ENCODE measurements at regions of chr3 and their contacts with region 1.

Region 1: DNA sequence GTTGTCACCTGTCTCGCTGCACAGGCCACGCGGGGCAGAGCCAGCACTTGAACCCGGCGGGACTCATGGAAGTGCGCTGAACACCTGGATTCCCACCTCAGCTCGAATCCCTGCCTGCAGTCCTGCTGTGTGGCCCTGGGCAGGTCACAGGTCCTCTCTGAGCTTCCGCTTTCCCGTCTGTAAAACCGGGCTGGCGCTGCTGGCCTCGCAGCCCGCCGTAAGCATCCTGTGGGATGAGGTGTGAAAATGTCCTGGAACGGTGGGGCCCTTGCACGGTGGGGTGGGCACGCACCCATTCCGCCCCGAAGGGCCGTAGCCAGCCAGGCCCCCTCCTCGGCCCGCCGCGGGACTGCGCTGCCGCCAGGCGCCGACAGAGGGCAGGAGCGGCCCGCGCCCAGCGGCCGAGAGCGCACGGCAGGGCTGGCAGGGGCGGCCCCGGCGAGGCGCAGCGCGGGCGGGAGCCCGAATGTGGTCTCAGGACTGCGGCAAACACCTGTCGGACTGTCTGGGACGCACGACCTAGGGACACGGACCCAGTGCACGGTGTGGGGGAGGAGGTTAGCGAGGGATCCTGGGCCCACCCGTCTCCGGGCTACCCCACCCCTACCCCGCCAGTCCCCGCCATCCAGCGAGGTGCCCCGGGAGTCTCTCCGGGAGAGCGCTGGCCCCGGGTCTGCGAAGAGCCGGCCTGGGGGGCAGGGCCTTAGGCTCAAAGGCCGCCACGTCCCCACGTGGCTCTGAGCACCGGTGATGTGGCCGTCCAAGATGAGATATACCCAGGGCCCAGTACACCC is 40.4 kb downstream of the DNAJB8 start:
- DNase-seq: peak; percentile 23 to 81 (median 61)
- ATAC-seq: peak; percentile 93
- H3K4me3 ChIP-seq: no peak overlapping the region
- H3K4me3 Mint-ChIP-seq: peak overlapping the region in 1 of 10 donors; percentile 19
- H3K27ac ChIP-seq: no peak overlapping the region
- H3K27ac Mint-ChIP-seq: no peak overlapping the region
- H3K4me1 ChIP-seq: no peaks in the 10 kb centered on the region
- H3K4me1 Mint-ChIP-seq: peaks cover 0 to 4% (median 0%) of the 10 kb centered on the region in 7 donors
- H3K27me3 ChIP-seq: no peaks in the 10 kb centered on the region
- H3K27me3 Mint-ChIP-seq: peaks cover 9 to 35% (median 22%) of the 10 kb centered on the region in 5 donors

Region 2: DNA sequence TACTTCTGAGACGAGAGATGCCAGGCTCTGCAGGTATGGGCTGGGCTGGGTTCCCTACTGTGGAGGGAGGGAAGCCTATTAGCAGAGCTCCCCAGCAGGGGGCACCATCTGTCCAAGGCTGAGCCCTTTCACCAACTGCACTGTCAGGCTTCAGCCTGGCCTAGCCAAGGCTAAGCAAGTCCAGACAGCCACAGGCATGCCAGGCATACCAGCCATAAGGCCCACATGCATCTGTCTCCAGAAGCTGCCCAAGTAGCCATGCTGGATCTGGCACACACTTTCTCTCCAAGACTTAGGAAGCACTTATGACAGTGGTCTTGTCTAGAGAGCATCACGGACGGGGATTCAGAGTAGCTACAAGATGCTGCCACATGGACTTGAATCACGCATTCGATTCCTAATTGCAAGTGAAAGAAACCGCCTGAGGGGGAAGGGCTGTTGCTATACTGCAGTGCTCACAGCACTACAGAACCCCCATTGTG is 331.1 kb before region 1 on chr3:
- CTCF ChIA-PET with region 1: interaction called, 4 read pairs
- POLR2A ChIA-PET with region 1: no interaction called
- intact Hi-C with region 1: loop called (anchors 1 to 10 kb)
- DNase-seq: peak; percentile 51 to 79 (median 73)
- ATAC-seq: peak; percentile 99
- H3K4me3 ChIP-seq: no peak overlapping the region
- H3K4me3 Mint-ChIP-seq: no peak overlapping the region
- H3K27ac ChIP-seq: no peak overlapping the region
- H3K27ac Mint-ChIP-seq: peak overlapping the region in 4 of 9 donors; percentile 16 to 68 (median 36)
- H3K4me1 ChIP-seq: no peaks in the 10 kb centered on the region
- H3K4me1 Mint-ChIP-seq: peaks cover 1 to 18% (median 6%) of the 10 kb centered on the region in 7 donors
- H3K27me3 ChIP-seq: no peaks in the 10 kb centered on the region
- H3K27me3 Mint-ChIP-seq: no peaks in the 10 kb centered on the region

Region 3: GRCh38 chr3:128447561-128448013 is 21.3 kb after region 1 on chr3:
- CTCF ChIA-PET with region 1: no interaction called
- POLR2A ChIA-PET with region 1: no interaction called
- intact Hi-C with region 1: loop called in 1 of 2 experiments (anchors 1 kb)
- DNase-seq: peak in 5 of 9 donors; percentile 22 to 63 (median 27)
- ATAC-seq: peak; percentile 29
- H3K4me3 ChIP-seq: no peak overlapping the region
- H3K4me3 Mint-ChIP-seq: peak overlapping the region in 6 of 10 donors; percentile 4 to 82 (median 34)
- H3K27ac ChIP-seq: peak overlapping the region; percentile 4
- H3K27ac Mint-ChIP-seq: peak overlapping the region in 7 of 9 donors; percentile 39 to 94 (median 81)
- H3K4me1 ChIP-seq: peaks cover 0 to 17% of the 10 kb centered on the region in 2 donors
- H3K4me1 Mint-ChIP-seq: peaks cover 17 to 45% (median 36%) of the 10 kb centered on the region in 7 donors
- H3K27me3 ChIP-seq: no peaks in the 10 kb centered on the region
- H3K27me3 Mint-ChIP-seq: peaks cover 0 to 8% (median 3%) of the 10 kb centered on the region in 5 donors

Region 4: DNA sequence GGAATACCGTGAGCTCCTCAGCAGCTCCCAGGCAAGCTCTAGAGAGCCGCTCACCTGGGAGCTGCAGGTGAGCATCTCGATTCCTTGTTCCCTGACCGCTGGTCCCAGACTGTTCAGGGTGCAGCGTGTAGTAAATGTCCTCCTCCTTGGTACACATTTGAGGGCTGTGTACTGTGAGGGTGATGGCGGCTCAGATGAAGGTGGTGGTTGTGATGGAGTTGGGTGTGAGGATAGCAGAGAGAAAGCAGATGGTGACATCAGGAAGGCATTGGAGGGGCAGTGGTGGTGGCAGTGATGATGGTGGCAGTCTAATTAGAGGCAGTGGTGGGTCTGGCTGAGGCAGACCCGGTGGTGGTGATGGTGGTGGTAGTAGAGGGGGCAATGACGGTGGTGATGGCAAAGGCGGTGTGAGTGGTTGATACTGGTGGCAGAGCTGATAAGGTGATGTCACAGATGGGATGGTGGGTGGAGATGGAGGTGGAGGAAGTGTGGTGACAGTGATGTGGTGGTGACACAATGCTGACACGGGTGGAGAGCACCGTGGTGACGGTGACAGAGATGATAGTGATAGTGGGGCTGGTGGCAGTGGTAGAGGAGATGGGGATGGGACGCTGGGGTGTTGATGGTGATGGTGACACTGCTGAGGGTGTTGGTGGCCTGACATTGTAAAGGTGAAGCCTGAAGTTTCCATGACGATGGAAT is 40.7 kb after region 1 on chr3 and contains the start of gene DNAJB8:
- CTCF ChIA-PET with region 1: no interaction called
- POLR2A ChIA-PET with region 1: no interaction called
- intact Hi-C with region 1: loop called in 1 of 2 experiments (anchors 5 kb)
- DNase-seq: peak in 7 of 9 donors; percentile 15 to 55 (median 37)
- ATAC-seq: peak; percentile 84
- H3K4me3 ChIP-seq: no peak within 1 kb of the TSS
- H3K4me3 Mint-ChIP-seq: peak within 1 kb of the TSS in 1 of 10 donors; percentile 38
- H3K27ac ChIP-seq: no peak within 1 kb of the TSS
- H3K27ac Mint-ChIP-seq: peak within 1 kb of the TSS in 8 of 9 donors; percentile 0 to 69 (median 49)
- H3K4me1 ChIP-seq: no peaks in the 10 kb centered on the region
- H3K4me1 Mint-ChIP-seq: peaks cover 3 to 15% (median 9%) of the 10 kb centered on the region in 7 donors
- H3K27me3 ChIP-seq: no peaks in the 10 kb centered on the region
- H3K27me3 Mint-ChIP-seq: peaks cover 20 to 36% (median 24%) of the 10 kb centered on the region in 5 donors
- total RNA-seq, gene DNAJB8: not detected

Region 5: GRCh38 chr3:128487813-128488635 is 61.7 kb after region 1 on chr3:
- CTCF ChIA-PET with region 1: no interaction called
- POLR2A ChIA-PET with region 1: no interaction called
- intact Hi-C with region 1: loop called in 1 of 2 experiments (anchors 2 kb)
- DNase-seq: peak in 2 of 9 donors; percentile 28 to 36
- ATAC-seq: peak; percentile 30
- H3K4me3 ChIP-seq: peak overlapping the region; percentile 59
- H3K4me3 Mint-ChIP-seq: peak overlapping the region in 9 of 10 donors; percentile 25 to 97 (median 89)
- H3K27ac ChIP-seq: no peak overlapping the region
- H3K27ac Mint-ChIP-seq: no peak overlapping the region
- H3K4me1 ChIP-seq: peaks cover 11 to 61% of the 10 kb centered on the region in 2 donors
- H3K4me1 Mint-ChIP-seq: peaks cover 21 to 52% (median 31%) of the 10 kb centered on the region in 7 donors
- H3K27me3 ChIP-seq: peaks cover 14 to 52% of the 10 kb centered on the region in 2 donors
- H3K27me3 Mint-ChIP-seq: peaks cover 58 to 80% (median 62%) of the 10 kb centered on the region in 5 donors

Region 6: DNA sequence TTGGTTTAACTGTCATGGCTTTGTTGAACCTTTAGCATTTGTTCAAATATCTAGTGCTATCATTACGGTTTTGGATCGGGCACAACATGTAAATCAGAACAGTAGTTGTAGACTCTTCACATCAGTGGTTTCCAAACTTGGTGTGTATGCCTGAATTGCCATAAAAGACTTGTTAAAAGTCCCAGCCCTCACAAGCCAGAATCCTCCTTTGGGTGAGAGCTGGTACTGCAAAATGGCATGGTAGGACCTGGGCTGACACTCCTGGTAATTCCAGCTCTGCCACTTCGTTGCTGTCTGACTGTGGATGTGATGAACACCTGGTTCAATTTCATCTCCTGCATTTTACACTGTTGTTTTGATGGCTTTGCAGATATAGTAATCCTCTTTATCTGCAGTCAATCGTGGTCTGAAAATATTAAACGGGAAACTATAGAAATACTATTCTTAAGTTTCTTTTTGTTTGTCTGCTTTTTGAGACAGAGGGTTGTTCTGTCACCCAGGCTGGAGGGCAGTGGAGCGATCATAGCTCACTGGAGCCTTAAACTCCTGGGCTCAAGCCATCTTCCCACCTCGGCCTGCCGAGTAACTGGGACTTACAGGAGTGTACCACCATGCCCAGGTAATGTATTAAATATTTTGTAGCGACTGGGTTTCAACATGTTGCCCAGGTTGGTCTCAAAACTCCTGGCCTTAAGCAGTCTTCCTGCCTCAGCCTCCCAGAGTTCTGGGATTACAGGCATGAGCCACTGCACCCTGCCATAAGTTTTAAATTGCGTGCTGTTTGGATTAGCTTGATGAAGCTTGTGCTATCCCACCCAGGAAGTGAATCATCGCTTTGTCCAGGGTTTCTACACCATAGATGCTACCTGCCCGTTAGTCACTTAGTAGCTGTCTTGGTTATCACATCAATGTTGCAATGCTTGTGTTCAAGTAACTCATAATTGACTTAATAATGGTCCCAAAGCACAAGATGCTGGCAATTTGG is 361.2 kb after region 1 on chr3:
- CTCF ChIA-PET with region 1: no interaction called
- POLR2A ChIA-PET with region 1: no interaction called
- intact Hi-C with region 1: no loop called
- DNase-seq: peak in 5 of 9 donors; percentile 23 to 37 (median 30)
- ATAC-seq: peak; percentile 63
- H3K4me3 ChIP-seq: peak overlapping the region; percentile 8
- H3K4me3 Mint-ChIP-seq: peak overlapping the region; percentile 48 to 88 (median 84)
- H3K27ac ChIP-seq: peak overlapping the region; percentile 66
- H3K27ac Mint-ChIP-seq: peak overlapping the region; percentile 83 to 97 (median 96)
- H3K4me1 ChIP-seq: peaks cover 35 to 74% of the 10 kb centered on the region in 2 donors
- H3K4me1 Mint-ChIP-seq: peaks cover 67 to 98% (median 85%) of the 10 kb centered on the region in 7 donors
- H3K27me3 ChIP-seq: no peaks in the 10 kb centered on the region
- H3K27me3 Mint-ChIP-seq: no peaks in the 10 kb centered on the region

Measured in naive thymus-derived CD4-positive, alpha-beta T cell (primary cell).